Dendritic cell treated with granulocyte-macrophage colony-stimulating factor and Interleukin-4, amounts not matched to agents 40 ng/mL and 50 ng/mL, for 4 days (primary cell): ENCODE measurements at regions of chr10 and their contacts with region 1.

Region 1: GRCh38 chr10:86521678-86522509 is at the start of gene WAPL:
- H3K4me3 Mint-ChIP-seq: peak within 1 kb of the TSS; percentile 94
- H3K27ac Mint-ChIP-seq: peak within 1 kb of the TSS; percentile 89
- H3K4me1 Mint-ChIP-seq: peaks cover 35% of the 10 kb centered on the region
- H3K27me3 Mint-ChIP-seq: no peaks in the 10 kb centered on the region

Region 2: DNA sequence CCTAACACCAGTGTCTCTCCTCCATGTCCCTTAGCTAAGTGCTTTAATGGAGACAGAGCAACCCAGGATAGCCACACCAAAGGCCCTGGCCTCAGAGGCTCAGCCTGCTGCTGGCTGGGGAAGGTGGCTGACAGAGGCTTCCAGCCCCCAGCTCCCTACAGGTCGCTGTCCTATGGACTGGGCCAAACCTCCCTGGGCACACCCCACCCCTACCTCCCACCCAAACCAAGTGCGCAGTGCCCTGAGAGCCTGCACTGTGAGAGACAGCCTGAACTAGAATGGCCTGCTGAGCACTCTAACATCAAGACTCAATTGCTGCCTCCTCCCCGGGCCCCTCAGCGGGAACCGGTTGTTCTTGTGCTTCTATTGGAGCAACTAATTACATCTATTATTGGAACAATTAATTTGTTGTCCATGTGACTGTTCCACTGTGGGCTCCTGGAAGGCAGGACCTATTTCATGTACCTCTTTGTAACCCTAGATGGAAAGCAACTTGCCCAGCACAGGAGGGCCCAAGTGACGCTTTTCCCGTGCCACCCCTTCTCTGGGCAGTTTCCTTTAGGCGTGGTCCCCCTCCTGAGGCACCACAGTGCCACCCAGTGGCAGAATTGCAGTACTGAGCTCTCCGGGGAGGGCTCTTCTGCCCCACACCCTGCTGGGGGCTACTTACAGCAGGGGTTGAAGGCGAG is 63.3 kb after region 1 on chr10:
- intact Hi-C with region 1: loop called (anchors 1 kb)
- H3K4me3 Mint-ChIP-seq: no peak overlapping the region
- H3K27ac Mint-ChIP-seq: no peak overlapping the region
- H3K4me1 Mint-ChIP-seq: peaks cover 14% of the 10 kb centered on the region
- H3K27me3 Mint-ChIP-seq: peaks cover 2% of the 10 kb centered on the region